ENCODE measurements at regions of chr12 and their contacts with region 1.

Region 1: GRCh38 chr12:53352331-53353256 is 16.4 kb upstream of the SP7 start:
- DNase-seq: peak; percentile 80 to 85 (median 85)
- H3K4me3 ChIP-seq: no peak overlapping the region
- H3K4me3 Mint-ChIP-seq: no peak overlapping the region
- H3K27ac ChIP-seq: no peak overlapping the region
- H3K27ac Mint-ChIP-seq: peak overlapping the region in 2 of 7 donors; percentile 70 to 72
- H3K4me1 ChIP-seq: peaks cover 5 to 9% of the 10 kb centered on the region in 2 donors
- H3K4me1 Mint-ChIP-seq: peaks cover 14% of the 10 kb centered on the region
- H3K27me3 ChIP-seq: no peaks in the 10 kb centered on the region
- H3K27me3 Mint-ChIP-seq: peaks cover 0 to 1% (median 0%) of the 10 kb centered on the region in 3 donors
- CTCF ChIP-seq: peak; percentile 79

Region 2: DNA sequence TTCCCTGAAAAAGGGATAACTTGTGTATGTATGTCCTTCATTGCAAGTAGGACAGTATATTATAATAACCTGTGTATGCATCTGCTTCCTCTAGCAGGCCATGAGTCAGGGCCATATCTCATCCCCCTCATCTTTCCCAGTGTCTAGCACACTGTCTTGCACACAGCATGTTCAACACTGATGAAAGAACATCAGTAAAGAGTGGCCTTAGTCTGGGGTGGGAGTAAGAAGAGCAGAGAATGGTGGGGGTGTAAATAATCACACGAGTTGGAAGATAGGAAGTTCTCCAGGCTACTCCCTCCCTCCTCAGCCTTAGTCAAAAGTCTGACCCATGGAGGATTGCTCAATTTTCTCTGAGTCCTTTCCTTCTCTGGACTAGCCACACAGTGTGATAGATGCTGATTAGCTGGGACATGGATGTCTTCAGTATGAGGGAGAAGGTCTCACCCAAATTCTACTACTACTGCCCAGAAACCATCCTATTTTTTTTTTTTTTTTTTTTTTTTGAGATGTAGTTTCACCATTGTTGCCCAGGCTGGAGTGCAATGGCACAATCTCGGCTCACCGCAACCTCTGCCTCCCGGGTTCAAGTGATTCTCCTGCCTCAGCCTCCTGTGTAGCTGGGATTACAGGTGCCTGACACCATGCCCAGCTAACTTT is 12.8 kb after region 1 on chr12:
- intact Hi-C with region 1: loop called in 1 of 2 experiments (anchors 2 kb)
- DNase-seq: peak; percentile 67 to 87 (median 84)
- H3K4me3 ChIP-seq: peak overlapping the region in 1 of 3 experiments; percentile 30
- H3K4me3 Mint-ChIP-seq: peak overlapping the region; percentile 56 to 83
- H3K27ac ChIP-seq: peak overlapping the region; percentile 75 to 86
- H3K27ac Mint-ChIP-seq: peak overlapping the region; percentile 93 to 99 (median 97)
- H3K4me1 ChIP-seq: peaks cover 55 to 58% of the 10 kb centered on the region in 2 donors
- H3K4me1 Mint-ChIP-seq: peaks cover 41% of the 10 kb centered on the region
- H3K27me3 ChIP-seq: no peaks in the 10 kb centered on the region
- H3K27me3 Mint-ChIP-seq: no peaks in the 10 kb centered on the region
- CTCF ChIP-seq: no peak

Region 3: DNA sequence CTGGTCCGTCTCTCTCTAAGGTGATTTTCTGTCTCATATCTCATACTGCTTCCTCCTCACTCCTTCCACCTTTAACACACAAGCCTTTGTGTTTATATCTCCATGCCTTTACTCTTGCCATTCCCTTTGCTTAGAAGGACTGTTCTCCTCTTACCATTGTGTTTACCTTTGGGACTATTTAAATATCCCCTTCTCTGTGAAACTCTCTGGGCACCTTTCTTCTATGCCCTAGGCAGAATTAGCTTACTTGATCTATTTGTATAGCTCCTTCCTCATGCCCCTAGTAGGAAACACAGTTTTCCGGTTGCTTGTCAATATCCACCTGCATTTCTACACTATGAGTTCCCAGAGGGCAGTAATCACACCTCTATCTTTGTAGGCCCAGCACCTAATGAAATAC is 67.2 kb after region 1 on chr12:
- intact Hi-C with region 1: loop called (anchors 2 kb)
- DNase-seq: no peak
- H3K4me3 ChIP-seq: no peak overlapping the region
- H3K4me3 Mint-ChIP-seq: no peak overlapping the region
- H3K27ac ChIP-seq: no peak overlapping the region
- H3K27ac Mint-ChIP-seq: no peak overlapping the region
- H3K4me1 ChIP-seq: peaks cover 21 to 25% of the 10 kb centered on the region in 2 donors
- H3K4me1 Mint-ChIP-seq: peaks cover 42% of the 10 kb centered on the region
- H3K27me3 ChIP-seq: no peaks in the 10 kb centered on the region
- H3K27me3 Mint-ChIP-seq: peaks cover 1 to 4% (median 2%) of the 10 kb centered on the region in 3 donors
- CTCF ChIP-seq: no peak